HCT116 (cell line): ENCODE measurements at regions of chr7 and their contacts with region 1.

Region 1: DNA sequence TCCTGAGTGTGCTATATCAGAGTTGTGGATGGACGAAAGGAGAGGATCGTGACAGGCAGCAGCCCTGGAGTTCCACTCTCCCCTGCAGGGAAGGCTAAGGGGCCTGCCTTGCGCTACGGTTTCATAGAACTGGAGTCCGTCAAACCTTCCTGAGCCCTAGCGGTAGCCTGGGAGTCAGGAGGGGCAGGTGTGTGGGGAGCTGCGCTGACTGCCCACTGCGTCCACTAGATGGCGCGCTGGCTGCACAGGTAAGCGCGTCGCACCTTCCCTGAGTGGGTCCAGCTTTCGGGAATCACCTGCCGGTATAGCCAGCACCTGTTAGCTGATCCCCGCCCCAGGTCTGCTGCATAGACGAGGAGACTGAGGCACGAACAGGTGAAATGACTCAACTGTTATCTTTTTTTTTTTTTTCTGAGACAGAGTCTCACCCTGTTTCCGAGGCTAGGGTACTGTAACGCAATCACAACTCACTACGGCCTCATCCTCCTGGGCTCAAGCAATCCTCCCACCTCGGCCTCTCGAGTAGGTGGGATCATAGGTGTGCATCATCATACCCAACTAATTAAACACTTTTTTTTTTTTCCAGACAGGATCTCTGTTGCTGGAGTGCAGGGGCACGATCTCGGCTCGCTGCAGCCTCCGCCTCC is 20.2 kb upstream of the BAIAP2L1 start:
- DNase-seq: peak; percentile 90
- ATAC-seq: peak; percentile 76
- H3K4me3 ChIP-seq: no peak overlapping the region
- H3K27ac ChIP-seq: no peak overlapping the region
- H3K4me1 ChIP-seq: peaks cover 30 to 57% of the 10 kb centered on the region in 2 experiments
- H3K27me3 ChIP-seq: no peaks in the 10 kb centered on the region
- CTCF ChIP-seq: peak in 2 of 3 experiments; percentile 98 to 100; a peak in 4 of 6 replicates
- POLR2A ChIP-seq: no peak
- RAD21 ChIP-seq: no peak

Region 2: GRCh38 chr7:97130417-97131139 is 1290.5 kb before region 1 on chr7:
- CTCF ChIA-PET with region 1: no interaction called
- POLR2A ChIA-PET with region 1: no interaction called
- RAD21 ChIA-PET with region 1: no interaction called
- intact Hi-C with region 1: no loop called
- DNase-seq: no peak
- ATAC-seq: peak; percentile 27; the same call in 1 of the 2 replicates
- H3K4me3 ChIP-seq: no peak overlapping the region
- H3K27ac ChIP-seq: no peak overlapping the region
- H3K4me1 ChIP-seq: peaks cover 0 to 3% of the 10 kb centered on the region in 2 experiments; a peak in 1 of 4 replicates
- H3K27me3 ChIP-seq: no peaks in the 10 kb centered on the region
- CTCF ChIP-seq: no peak
- POLR2A ChIP-seq: no peak
- RAD21 ChIP-seq: no peak

Region 3: GRCh38 chr7:98211221-98211675 is 209.8 kb before region 1 on chr7 and contains the start of gene BHLHA15:
- CTCF ChIA-PET with region 1: no interaction called
- POLR2A ChIA-PET with region 1: no interaction called
- RAD21 ChIA-PET with region 1: no interaction called
- intact Hi-C with region 1: no loop called
- DNase-seq: no peak
- ATAC-seq: peak; percentile 89
- H3K4me3 ChIP-seq: peak within 1 kb of the TSS; percentile 62 to 72
- H3K27ac ChIP-seq: peak within 1 kb of the TSS; percentile 57; the same call in 1 of the 2 replicates
- H3K4me1 ChIP-seq: peaks cover 3 to 7% of the 10 kb centered on the region in 2 experiments; a peak in 2 of 4 replicates
- H3K27me3 ChIP-seq: no peaks in the 10 kb centered on the region
- CTCF ChIP-seq: no peak
- POLR2A ChIP-seq: no peak
- RAD21 ChIP-seq: no peak
- total RNA-seq, gene BHLHA15: 5.2 TPM

Region 4: GRCh38 chr7:98294796-98295382 is 126.2 kb before region 1 on chr7:
- CTCF ChIA-PET with region 1: interaction called, 4 read pairs
- POLR2A ChIA-PET with region 1: no interaction called
- RAD21 ChIA-PET with region 1: no interaction called
- intact Hi-C with region 1: loop called (anchors 2 kb)
- DNase-seq: peak; percentile 41
- ATAC-seq: peak; percentile 93
- H3K4me3 ChIP-seq: no peak overlapping the region
- H3K27ac ChIP-seq: peak overlapping the region; percentile 21; the same call in 1 of the 2 replicates
- H3K4me1 ChIP-seq: peaks cover 0 to 13% of the 10 kb centered on the region in 2 experiments; a peak in 2 of 4 replicates
- H3K27me3 ChIP-seq: no peaks in the 10 kb centered on the region
- CTCF ChIP-seq: peak; percentile 79 to 86 (median 82); a peak in 5 of 6 replicates
- POLR2A ChIP-seq: no peak
- RAD21 ChIP-seq: peak; percentile 98

Region 5: DNA sequence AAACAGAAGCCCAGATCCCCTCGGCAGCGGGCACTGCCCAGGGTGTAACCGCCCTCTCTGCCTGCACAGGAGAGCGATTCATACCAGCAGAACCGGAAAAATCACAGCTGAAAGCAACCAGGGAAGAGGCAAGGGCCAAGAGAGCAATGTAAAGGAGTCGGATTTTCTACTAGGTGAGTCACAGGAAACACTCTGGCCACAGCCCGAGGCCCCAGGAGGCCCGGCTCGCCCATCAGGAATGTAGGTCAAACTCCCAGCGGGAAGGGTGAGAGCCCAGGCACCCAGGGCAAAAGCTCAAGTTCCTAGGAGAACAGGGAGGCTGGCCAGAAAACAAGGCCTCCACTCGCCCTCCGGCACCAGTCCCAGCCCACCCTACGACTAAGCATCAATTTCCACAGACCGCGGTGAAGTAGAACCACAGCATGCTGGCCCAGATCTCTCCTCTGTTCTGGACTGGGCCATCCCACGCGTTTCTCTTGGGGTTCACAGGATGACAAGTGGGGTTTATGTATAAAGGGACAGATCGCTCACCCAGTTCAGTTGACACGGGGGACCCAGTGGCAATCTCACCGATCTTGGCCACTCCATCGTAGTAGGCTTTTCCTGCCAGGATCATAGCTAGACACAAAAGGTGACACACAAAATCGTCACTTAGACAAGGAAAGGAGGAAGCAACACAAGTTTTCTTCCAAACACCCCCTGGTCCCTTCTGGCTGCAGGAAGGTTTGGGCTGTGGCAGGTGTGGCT is 66.4 kb before region 1 on chr7:
- CTCF ChIA-PET with region 1: no interaction called
- POLR2A ChIA-PET with region 1: no interaction called
- RAD21 ChIA-PET with region 1: no interaction called
- intact Hi-C with region 1: loop called (anchors 1 kb)
- DNase-seq: peak; percentile 91
- ATAC-seq: peak; percentile 90
- H3K4me3 ChIP-seq: peak overlapping the region; percentile 28 to 49
- H3K27ac ChIP-seq: peak overlapping the region; percentile 87
- H3K4me1 ChIP-seq: peaks cover 63 to 84% of the 10 kb centered on the region in 2 experiments
- H3K27me3 ChIP-seq: no peaks in the 10 kb centered on the region
- CTCF ChIP-seq: no peak
- POLR2A ChIP-seq: no peak
- RAD21 ChIP-seq: peak; percentile 42; the same call in 1 of the 2 replicates

Region 6: DNA sequence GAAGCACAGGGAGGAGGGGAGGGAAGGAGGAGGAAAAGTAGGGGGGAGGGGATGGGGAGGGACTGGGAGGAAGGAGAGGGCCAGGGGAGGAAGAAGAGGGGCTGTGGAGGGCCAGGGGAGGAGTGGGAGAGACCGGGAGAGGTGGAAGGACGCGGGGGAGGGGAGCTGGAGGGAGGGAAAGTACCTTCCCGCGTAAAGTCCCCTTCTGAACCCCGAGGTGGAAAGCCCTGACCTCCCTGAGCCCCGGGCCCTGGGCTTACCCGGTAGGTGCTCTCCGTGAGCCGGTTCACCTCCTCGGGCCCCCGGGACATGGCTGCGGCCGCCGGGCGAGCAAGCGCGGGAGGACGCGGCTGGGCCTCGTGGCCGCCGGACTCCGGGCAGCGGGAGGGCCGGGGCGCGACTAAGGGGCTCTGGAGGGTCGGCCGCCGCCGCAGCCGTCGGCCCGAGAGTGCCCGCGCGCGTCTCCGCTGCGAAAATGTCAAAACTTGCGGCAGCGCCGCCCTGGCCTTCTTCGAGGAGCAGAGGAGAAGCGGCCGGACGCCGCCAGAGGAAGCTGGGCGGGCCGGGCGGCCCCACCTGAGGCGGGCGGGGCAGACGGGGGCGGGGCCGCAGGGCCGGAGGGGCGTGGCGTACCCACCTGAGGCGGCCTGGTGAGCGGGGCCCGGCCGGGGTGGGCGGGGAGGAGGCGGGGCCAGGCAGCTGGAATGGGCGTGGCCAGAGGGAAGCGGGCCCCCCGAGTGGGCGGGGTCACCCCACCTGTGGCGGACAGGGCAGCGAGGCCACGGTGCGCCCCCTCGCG is 20.3 kb before region 1 on chr7 and contains the start of gene BAIAP2L1:
- CTCF ChIA-PET with region 1: interaction called, 31 read pairs
- POLR2A ChIA-PET with region 1: interaction called, 11 read pairs
- RAD21 ChIA-PET with region 1: interaction called in 1 of 2 experiments, 3 read pairs
- intact Hi-C with region 1: no loop called
- DNase-seq: peak; percentile 82
- ATAC-seq: peak; percentile 95
- H3K4me3 ChIP-seq: peak within 1 kb of the TSS; percentile 58 to 91
- H3K27ac ChIP-seq: peak within 1 kb of the TSS; percentile 94
- H3K4me1 ChIP-seq: peaks cover 16 to 44% of the 10 kb centered on the region in 2 experiments; a peak in 3 of 4 replicates
- H3K27me3 ChIP-seq: no peaks in the 10 kb centered on the region
- CTCF ChIP-seq: no peak; a peak in 1 of 6 replicates
- POLR2A ChIP-seq: no peak
- RAD21 ChIP-seq: peak; percentile 91
- total RNA-seq, gene BAIAP2L1: 61.2 TPM

Region 7: GRCh38 chr7:98569691-98570337 is 148.7 kb after region 1 on chr7:
- CTCF ChIA-PET with region 1: no interaction called
- POLR2A ChIA-PET with region 1: no interaction called
- RAD21 ChIA-PET with region 1: no interaction called
- intact Hi-C with region 1: no loop called
- DNase-seq: no peak
- ATAC-seq: no peak
- H3K4me3 ChIP-seq: no peak overlapping the region
- H3K27ac ChIP-seq: no peak overlapping the region
- H3K4me1 ChIP-seq: no peaks in the 10 kb centered on the region
- H3K27me3 ChIP-seq: no peaks in the 10 kb centered on the region
- CTCF ChIP-seq: no peak
- POLR2A ChIP-seq: no peak
- RAD21 ChIP-seq: no peak

Region 8: GRCh38 chr7:98745722-98746318 is 324.7 kb after region 1 on chr7:
- CTCF ChIA-PET with region 1: interaction called, 12 read pairs
- POLR2A ChIA-PET with region 1: no interaction called
- RAD21 ChIA-PET with region 1: interaction called in 1 of 2 experiments, 4 read pairs
- intact Hi-C with region 1: no loop called
- DNase-seq: peak; percentile 57
- ATAC-seq: peak; percentile 96
- H3K4me3 ChIP-seq: no peak overlapping the region
- H3K27ac ChIP-seq: no peak overlapping the region
- H3K4me1 ChIP-seq: no peaks in the 10 kb centered on the region
- H3K27me3 ChIP-seq: no peaks in the 10 kb centered on the region
- CTCF ChIP-seq: peak; percentile 79 to 97 (median 93)
- POLR2A ChIP-seq: no peak
- RAD21 ChIP-seq: peak; percentile 78

Region 9: DNA sequence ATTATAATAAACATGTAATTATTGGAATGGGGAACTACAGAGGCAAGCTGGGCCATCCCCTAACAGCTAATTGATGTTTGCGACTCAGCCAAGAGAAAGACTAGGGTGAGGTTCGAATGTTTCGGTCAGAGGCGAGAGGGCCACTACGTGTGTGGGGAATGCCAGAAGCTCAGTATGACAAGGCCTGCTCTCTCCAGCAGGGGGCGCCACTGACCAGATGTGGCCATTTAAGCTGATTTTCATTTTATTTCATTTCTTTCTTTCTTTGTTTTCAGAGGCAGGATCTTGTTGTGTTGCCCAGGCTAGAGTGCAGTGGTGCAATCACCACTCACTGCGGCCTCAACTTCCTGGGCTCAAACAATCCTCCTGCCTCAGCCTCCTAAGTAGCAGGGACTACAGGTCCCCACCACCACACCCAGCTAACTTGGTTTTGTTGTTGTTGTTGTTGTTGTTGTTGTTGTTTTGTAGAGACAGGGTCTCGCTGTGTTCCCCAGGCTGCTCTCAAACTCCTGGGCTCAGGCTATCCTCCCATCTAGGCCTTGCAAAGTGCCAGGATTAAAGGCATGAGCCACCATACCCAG is 410.6 kb after region 1 on chr7:
- CTCF ChIA-PET with region 1: interaction called, 11 read pairs
- POLR2A ChIA-PET with region 1: interaction called, 6 read pairs
- RAD21 ChIA-PET with region 1: no interaction called
- intact Hi-C with region 1: no loop called
- DNase-seq: no peak
- ATAC-seq: peak; percentile 73
- H3K4me3 ChIP-seq: no peak overlapping the region
- H3K27ac ChIP-seq: no peak overlapping the region
- H3K4me1 ChIP-seq: no peaks in the 10 kb centered on the region; a peak in 1 of 4 replicates
- H3K27me3 ChIP-seq: no peaks in the 10 kb centered on the region
- CTCF ChIP-seq: peak; percentile 14 to 87 (median 85); a peak in 4 of 6 replicates
- POLR2A ChIP-seq: no peak
- RAD21 ChIP-seq: peak; percentile 46